ENCODE measurements at regions of chr7 and their contacts with region 1.

Region 1: GRCh38 chr7:91034459-91035368 is 229.5 kb upstream of the FZD1 start:
- DNase-seq: peak; percentile 45
- CTCF ChIP-seq: peak; percentile 64

Region 2: DNA sequence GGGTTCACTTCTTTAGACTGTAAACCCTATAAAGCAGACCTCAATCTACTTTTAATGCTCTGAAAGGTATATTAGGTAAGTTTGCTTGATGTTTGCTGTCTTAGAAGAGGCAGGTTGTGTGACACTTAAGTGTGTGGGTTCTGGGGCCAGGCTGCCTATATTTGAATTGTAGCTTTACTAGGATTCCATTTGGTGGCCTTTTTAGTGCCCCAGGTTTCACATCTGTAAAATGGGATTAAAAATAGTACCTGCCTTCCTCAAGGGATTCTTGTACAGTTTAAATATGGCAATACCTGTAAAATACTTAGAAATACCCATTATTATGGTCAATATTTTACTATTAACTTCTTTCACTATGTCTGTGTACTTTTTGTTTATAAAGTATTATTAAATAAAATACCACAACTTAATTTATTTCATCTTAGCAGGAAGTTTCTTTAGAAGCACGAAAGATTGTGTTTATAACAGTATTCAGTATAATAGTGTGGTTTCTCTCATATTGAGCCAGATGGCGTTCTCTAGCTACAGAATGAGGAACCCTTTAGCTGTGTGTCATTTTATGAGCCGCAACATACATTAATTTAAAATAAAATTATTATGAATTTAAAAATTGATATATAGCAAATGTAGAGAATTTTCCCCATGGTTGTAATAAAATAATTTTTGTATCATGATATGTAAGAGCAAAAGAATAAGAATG is 344.4 kb before region 1 on chr7:
- CTCF ChIA-PET with region 1: interaction called, 10 read pairs
- POLR2A ChIA-PET with region 1: no interaction called
- DNase-seq: no peak
- CTCF ChIP-seq: no peak

Region 3: DNA sequence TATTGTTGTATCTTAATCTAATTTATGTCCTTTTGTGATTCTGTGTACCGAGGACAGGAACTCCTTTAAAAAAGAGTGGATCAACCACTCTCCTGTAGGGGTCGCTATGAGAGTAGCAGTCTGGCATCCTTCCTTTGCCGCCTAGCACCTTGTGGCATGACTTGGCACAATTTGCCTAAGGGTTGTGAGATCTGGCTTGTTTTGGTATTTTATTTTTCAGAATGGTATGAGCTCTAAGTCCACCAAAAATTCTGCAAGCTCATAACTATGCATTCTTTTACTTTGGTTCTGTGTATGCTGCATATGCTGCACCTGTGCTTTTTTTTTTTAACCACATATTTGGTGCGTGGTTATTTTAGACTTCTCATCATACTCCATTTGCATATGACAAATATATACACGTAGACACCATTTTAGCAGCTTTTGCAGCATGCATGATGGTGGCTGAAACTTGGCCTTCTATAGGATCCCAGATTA is 325.8 kb before region 1 on chr7:
- CTCF ChIA-PET with region 1: interaction called, 43 read pairs
- POLR2A ChIA-PET with region 1: no interaction called
- DNase-seq: peak; percentile 45
- CTCF ChIP-seq: peak; percentile 67

Region 4: GRCh38 chr7:90736968-90737939 is 297.5 kb before region 1 on chr7:
- CTCF ChIA-PET with region 1: interaction called, 11 read pairs
- POLR2A ChIA-PET with region 1: no interaction called
- DNase-seq: peak; percentile 63
- CTCF ChIP-seq: no peak

Region 5: DNA sequence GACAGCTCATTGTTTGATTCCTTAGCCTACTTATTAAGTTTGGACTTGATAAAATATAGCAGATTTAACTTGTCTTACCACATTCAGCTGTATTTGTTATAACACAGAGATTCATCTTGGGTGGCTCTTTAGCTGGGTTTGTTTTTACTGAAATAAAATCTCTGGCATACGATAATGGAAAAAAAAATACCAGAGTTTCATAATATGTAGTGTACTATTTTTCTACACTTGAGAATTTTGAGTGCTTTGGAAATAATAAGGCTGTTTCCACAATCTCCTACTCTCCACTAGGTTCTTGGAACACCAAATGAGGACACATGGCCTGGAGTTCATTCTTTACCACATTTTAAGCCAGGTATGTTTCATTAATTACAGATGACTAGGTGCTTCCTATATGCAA is 10.9 kb after region 1 on chr7:
- CTCF ChIA-PET with region 1: interaction called, 11 read pairs
- POLR2A ChIA-PET with region 1: no interaction called
- DNase-seq: no peak
- CTCF ChIP-seq: no peak

Measured in GM10248 (cell line).